CD4-positive, alpha-beta memory T cell (primary cell): ENCODE measurements at regions of chr10 and their contacts with region 1.

Region 1: DNA sequence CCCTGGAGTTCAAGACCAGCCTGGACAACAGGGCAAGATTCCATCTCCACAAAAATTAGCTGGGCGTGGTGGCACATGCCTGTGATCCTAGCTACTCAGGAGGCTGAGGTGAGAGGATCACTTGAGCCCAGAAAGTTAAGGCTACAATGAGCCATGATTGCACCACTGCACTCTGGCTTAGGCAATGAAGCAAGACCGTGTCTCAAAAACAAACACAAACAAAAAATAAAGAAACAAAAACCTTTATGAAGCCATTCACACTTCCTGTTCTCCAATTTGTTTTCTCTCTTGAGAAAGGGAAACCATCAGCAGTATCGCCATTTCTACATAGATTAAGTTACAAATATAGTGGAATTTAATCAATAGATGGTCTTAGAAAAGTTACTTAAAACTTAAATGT is 19.8 kb downstream of the YME1L1 start:
- DNase-seq: no peak
- H3K4me3 ChIP-seq: no peak overlapping the region
- H3K4me3 Mint-ChIP-seq: no peak overlapping the region
- H3K27ac ChIP-seq: no peak overlapping the region
- H3K27ac Mint-ChIP-seq: peak overlapping the region in 1 of 7 donors; percentile 20
- H3K4me1 ChIP-seq: no peaks in the 10 kb centered on the region
- H3K4me1 Mint-ChIP-seq: peaks cover 0 to 13% (median 9%) of the 10 kb centered on the region in 4 donors
- H3K27me3 ChIP-seq: no peaks in the 10 kb centered on the region
- H3K27me3 Mint-ChIP-seq: no peaks in the 10 kb centered on the region

Region 2: GRCh38 chr10:27099916-27100812 is 34.2 kb before region 1 on chr10 and contains the start of gene ANKRD26:
- CTCF ChIA-PET with region 1: no interaction called
- POLR2A ChIA-PET with region 1: no interaction called
- intact Hi-C with region 1: loop called (anchors 2 kb)
- DNase-seq: peak; percentile 95 to 96 (median 95)
- H3K4me3 ChIP-seq: peak within 1 kb of the TSS; percentile 58 to 67
- H3K4me3 Mint-ChIP-seq: peak within 1 kb of the TSS; percentile 92 to 99 (median 96)
- H3K27ac ChIP-seq: peak within 1 kb of the TSS; percentile 76
- H3K27ac Mint-ChIP-seq: peak within 1 kb of the TSS; percentile 94 to 99 (median 98)
- H3K4me1 ChIP-seq: peaks cover 33% of the 10 kb centered on the region
- H3K4me1 Mint-ChIP-seq: peaks cover 21 to 49% (median 37%) of the 10 kb centered on the region in 4 donors
- H3K27me3 ChIP-seq: no peaks in the 10 kb centered on the region
- H3K27me3 Mint-ChIP-seq: no peaks in the 10 kb centered on the region
- total RNA-seq, gene ANKRD26: 10.7 to 11.6 TPM